CD4-positive, alpha-beta T cell (primary cell): ENCODE measurements at regions of chr5 and their contacts with region 1.

Region 1: GRCh38 chr5:141524604-141525597 is 36.0 kb downstream of the PCDHGC5 start:
- DNase-seq: peak; percentile 27 to 80 (median 39)
- ATAC-seq: peak; percentile 71
- H3K4me3 ChIP-seq: no peak overlapping the region
- H3K4me3 Mint-ChIP-seq: no peak overlapping the region
- H3K27ac ChIP-seq: no peak overlapping the region
- H3K27ac Mint-ChIP-seq: peak overlapping the region; percentile 13
- H3K4me1 ChIP-seq: peaks cover 13% of the 10 kb centered on the region
- H3K4me1 Mint-ChIP-seq: peaks cover 12% of the 10 kb centered on the region
- H3K27me3 ChIP-seq: no peaks in the 10 kb centered on the region
- H3K27me3 Mint-ChIP-seq: no peaks in the 10 kb centered on the region
- CTCF ChIP-seq: peak; percentile 99

Region 2: DNA sequence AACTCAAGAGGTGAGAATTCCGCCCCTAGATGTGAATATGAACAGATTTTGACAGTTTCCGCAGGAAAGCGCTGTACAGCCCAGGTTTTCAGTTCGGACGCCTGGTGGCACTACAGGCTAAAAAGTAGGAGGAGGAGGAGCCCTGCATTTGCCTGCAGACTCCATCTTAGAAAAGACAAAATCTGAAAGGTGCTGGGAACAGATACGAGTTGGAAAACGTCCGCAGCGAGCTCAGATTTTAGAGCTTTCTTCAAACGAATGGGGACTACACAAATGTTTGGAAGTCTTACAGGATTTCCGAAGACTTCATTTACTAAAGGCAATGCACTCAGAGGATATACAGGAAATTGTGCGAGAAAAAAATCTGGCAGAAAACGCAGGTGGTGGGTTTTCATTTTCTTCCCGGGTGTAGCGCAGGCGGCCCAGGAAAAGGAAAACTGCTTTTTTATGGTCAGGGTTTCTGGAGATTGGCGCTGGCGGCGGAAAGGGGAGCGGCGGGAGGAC is 440.4 kb before region 1 on chr5:
- CTCF ChIA-PET with region 1: no interaction called
- POLR2A ChIA-PET with region 1: no interaction called
- intact Hi-C with region 1: loop called in 1 of 2 experiments (anchors 10 kb)
- DNase-seq: peak in 12 of 14 experiments; percentile 5 to 70 (median 30)
- ATAC-seq: peak; percentile 89
- H3K4me3 ChIP-seq: peak overlapping the region; percentile 50
- H3K4me3 Mint-ChIP-seq: peak overlapping the region; percentile 94
- H3K27ac ChIP-seq: no peak overlapping the region
- H3K27ac Mint-ChIP-seq: peak overlapping the region; percentile 50
- H3K4me1 ChIP-seq: peaks cover 2% of the 10 kb centered on the region
- H3K4me1 Mint-ChIP-seq: peaks cover 7% of the 10 kb centered on the region
- H3K27me3 ChIP-seq: peaks cover 0 to 5% of the 10 kb centered on the region in 2 experiments
- H3K27me3 Mint-ChIP-seq: peaks cover 64% of the 10 kb centered on the region
- CTCF ChIP-seq: peak; percentile 39

Region 3: GRCh38 chr5:141326088-141326854 is 198.6 kb before region 1 on chr5:
- CTCF ChIA-PET with region 1: interaction called, 5 read pairs
- POLR2A ChIA-PET with region 1: no interaction called
- intact Hi-C with region 1: loop called in 1 of 2 experiments (anchors 1 kb)
- DNase-seq: peak; percentile 51 to 83 (median 62)
- ATAC-seq: peak; percentile 93
- H3K4me3 ChIP-seq: peak overlapping the region; percentile 61
- H3K4me3 Mint-ChIP-seq: peak overlapping the region; percentile 92
- H3K27ac ChIP-seq: peak overlapping the region in 1 of 2 donors; percentile 24
- H3K27ac Mint-ChIP-seq: peak overlapping the region; percentile 74
- H3K4me1 ChIP-seq: peaks cover 8% of the 10 kb centered on the region
- H3K4me1 Mint-ChIP-seq: peaks cover 11% of the 10 kb centered on the region
- H3K27me3 ChIP-seq: peaks cover 18 to 27% of the 10 kb centered on the region in 2 experiments
- H3K27me3 Mint-ChIP-seq: peaks cover 53% of the 10 kb centered on the region
- CTCF ChIP-seq: peak; percentile 58

Region 4: GRCh38 chr5:141412854-141413539 is 111.9 kb before region 1 on chr5 and contains the start of gene PCDHGA10:
- CTCF ChIA-PET with region 1: interaction called, 16 read pairs
- POLR2A ChIA-PET with region 1: no interaction called
- intact Hi-C with region 1: loop called (anchors 2 kb)
- DNase-seq: peak in 13 of 14 experiments; percentile 26 to 72 (median 39)
- ATAC-seq: peak; percentile 88
- H3K4me3 ChIP-seq: peak within 1 kb of the TSS; percentile 53
- H3K4me3 Mint-ChIP-seq: peak within 1 kb of the TSS; percentile 92
- H3K27ac ChIP-seq: no peak within 1 kb of the TSS
- H3K27ac Mint-ChIP-seq: no peak within 1 kb of the TSS
- H3K4me1 ChIP-seq: peaks cover 15% of the 10 kb centered on the region
- H3K4me1 Mint-ChIP-seq: peaks cover 24% of the 10 kb centered on the region
- H3K27me3 ChIP-seq: peaks cover 63 to 84% of the 10 kb centered on the region in 2 experiments
- H3K27me3 Mint-ChIP-seq: peaks cover 82% of the 10 kb centered on the region
- CTCF ChIP-seq: peak; percentile 71
- total RNA-seq, gene PCDHGA10: 0.08 TPM in 1 of 2 experiments, not detected in the other

Region 5: GRCh38 chr5:141501761-141502160 is 23.1 kb before region 1 on chr5:
- CTCF ChIA-PET with region 1: no interaction called
- POLR2A ChIA-PET with region 1: no interaction called
- intact Hi-C with region 1: no loop called
- DNase-seq: no peak
- ATAC-seq: no peak
- H3K4me3 ChIP-seq: no peak overlapping the region
- H3K4me3 Mint-ChIP-seq: no peak overlapping the region
- H3K27ac ChIP-seq: no peak overlapping the region
- H3K27ac Mint-ChIP-seq: no peak overlapping the region
- H3K4me1 ChIP-seq: no peaks in the 10 kb centered on the region
- H3K4me1 Mint-ChIP-seq: no peaks in the 10 kb centered on the region
- H3K27me3 ChIP-seq: peaks cover under 1 to 2% of the 10 kb centered on the region in 2 experiments
- H3K27me3 Mint-ChIP-seq: peaks cover 38% of the 10 kb centered on the region
- CTCF ChIP-seq: no peak

Region 6: DNA sequence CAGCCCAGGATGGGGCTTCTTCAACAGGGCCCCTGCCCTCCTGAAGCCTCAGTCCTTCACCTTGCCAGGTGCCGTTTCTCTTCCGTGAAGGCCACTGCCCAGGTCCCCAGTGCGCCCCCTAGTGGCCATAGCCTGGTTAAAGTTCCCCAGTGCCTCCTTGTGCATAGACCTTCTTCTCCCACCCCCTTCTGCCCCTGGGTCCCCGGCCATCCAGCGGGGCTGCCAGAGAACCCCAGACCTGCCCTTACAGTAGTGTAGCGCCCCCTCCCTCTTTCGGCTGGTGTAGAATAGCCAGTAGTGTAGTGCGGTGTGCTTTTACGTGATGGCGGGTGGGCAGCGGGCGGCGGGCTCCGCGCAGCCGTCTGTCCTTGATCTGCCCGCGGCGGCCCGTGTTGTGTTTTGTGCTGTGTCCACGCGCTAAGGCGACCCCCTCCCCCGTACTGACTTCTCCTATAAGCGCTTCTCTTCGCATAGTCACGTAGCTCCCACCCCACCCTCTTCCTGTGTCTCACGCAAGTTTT is 12.5 kb before region 1 on chr5:
- CTCF ChIA-PET with region 1: interaction called, 19 read pairs
- POLR2A ChIA-PET with region 1: interaction called, 4 read pairs
- intact Hi-C with region 1: no loop called
- DNase-seq: peak; percentile 70 to 91 (median 82)
- ATAC-seq: peak; percentile 51
- H3K4me3 ChIP-seq: peak overlapping the region; percentile 52
- H3K4me3 Mint-ChIP-seq: peak overlapping the region; percentile 95
- H3K27ac ChIP-seq: no peak overlapping the region
- H3K27ac Mint-ChIP-seq: peak overlapping the region; percentile 72
- H3K4me1 ChIP-seq: peaks cover 26% of the 10 kb centered on the region
- H3K4me1 Mint-ChIP-seq: peaks cover 25% of the 10 kb centered on the region
- H3K27me3 ChIP-seq: no peaks in the 10 kb centered on the region
- H3K27me3 Mint-ChIP-seq: peaks cover 4% of the 10 kb centered on the region
- CTCF ChIP-seq: peak; percentile 95

Region 7: DNA sequence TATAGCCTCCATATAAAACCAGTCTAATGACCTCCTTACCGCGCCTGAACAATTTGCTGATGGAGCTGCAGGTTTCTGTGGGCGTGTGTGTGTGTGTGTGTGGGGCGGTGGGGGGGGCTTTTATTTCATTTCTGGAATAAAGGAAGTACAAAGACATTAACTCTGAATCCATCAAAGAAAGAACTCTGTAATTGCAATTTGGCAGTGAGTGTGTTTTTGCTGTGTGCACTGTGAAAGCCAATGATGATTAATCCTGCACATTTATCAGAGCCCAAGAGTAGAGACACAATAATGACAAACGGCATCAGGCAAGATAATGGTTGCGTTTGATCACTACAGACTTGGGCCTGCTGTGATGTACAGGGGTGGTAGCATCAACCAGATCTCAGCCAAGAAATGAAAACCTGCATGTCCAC is 554.4 kb after region 1 on chr5:
- CTCF ChIA-PET with region 1: no interaction called
- POLR2A ChIA-PET with region 1: no interaction called
- intact Hi-C with region 1: no loop called
- DNase-seq: no peak
- ATAC-seq: no peak
- H3K4me3 ChIP-seq: no peak overlapping the region
- H3K4me3 Mint-ChIP-seq: no peak overlapping the region
- H3K27ac ChIP-seq: no peak overlapping the region
- H3K27ac Mint-ChIP-seq: no peak overlapping the region
- H3K4me1 ChIP-seq: no peaks in the 10 kb centered on the region
- H3K4me1 Mint-ChIP-seq: peaks cover 10% of the 10 kb centered on the region
- H3K27me3 ChIP-seq: no peaks in the 10 kb centered on the region
- H3K27me3 Mint-ChIP-seq: no peaks in the 10 kb centered on the region
- CTCF ChIP-seq: no peak